ENCODE measurements at regions of chr10 and their contacts with region 1.

Region 1: DNA sequence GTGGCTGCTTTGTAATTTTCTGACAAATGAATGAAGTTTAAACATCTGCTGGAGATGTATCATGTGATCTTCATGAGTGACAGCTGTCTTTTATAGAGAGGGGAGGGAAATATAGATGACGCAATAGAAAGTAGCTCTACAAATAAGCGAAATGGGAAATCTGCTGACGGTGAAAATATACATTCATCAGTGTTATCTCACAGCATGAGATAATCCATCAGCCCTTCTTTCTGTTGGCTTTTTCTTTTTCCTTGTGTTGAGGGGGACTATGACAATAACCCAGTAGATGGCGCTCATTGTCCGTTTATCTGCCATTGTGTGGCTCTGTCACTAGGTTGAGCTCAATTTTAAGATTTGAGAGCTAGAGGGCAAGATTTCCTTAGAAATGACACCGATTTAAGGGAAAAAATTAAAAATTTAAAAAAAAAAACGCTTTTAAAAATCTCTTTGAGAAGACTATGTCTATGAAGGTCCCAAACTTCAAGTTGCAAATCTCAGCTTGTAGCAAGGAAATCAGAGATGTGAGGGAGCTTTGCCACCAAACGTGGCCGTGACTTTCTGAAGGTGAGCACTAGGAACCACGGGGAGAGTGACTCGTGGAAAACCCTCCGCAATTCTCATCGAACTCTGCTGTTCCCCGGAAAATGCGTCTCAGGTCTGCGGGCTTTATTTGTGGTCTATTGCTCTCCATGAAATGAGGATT is 114.6 kb upstream of the SFMBT2 start:
- DNase-seq: peak; percentile 58 to 74 (median 68)
- ATAC-seq: peak; percentile 77
- H3K4me3 ChIP-seq: no peak overlapping the region
- H3K27ac ChIP-seq: no peak overlapping the region
- H3K4me1 ChIP-seq: no peaks in the 10 kb centered on the region
- H3K27me3 ChIP-seq: no peaks in the 10 kb centered on the region
- CTCF ChIP-seq: peak; percentile 61 to 94 (median 88)
- POLR2A ChIP-seq: no peak

Region 2: GRCh38 chr10:7687228-7687907 is 161.9 kb after region 1 on chr10:
- intact Hi-C with region 1: loop called (anchors 10 kb)
- DNase-seq: peak; percentile 81 to 91 (median 84)
- ATAC-seq: peak; percentile 86
- H3K4me3 ChIP-seq: no peak overlapping the region
- H3K27ac ChIP-seq: peak overlapping the region in 1 of 4 donors; percentile 6
- H3K4me1 ChIP-seq: no peaks in the 10 kb centered on the region
- H3K27me3 ChIP-seq: no peaks in the 10 kb centered on the region
- CTCF ChIP-seq: peak; percentile 85 to 98 (median 91)
- POLR2A ChIP-seq: no peak

Region 3: GRCh38 chr10:9302120-9302746 is 1776.8 kb after region 1 on chr10:
- intact Hi-C with region 1: loop called (anchors 10 kb)
- DNase-seq: peak in 1 of 4 donors; percentile 12
- ATAC-seq: no peak
- H3K4me3 ChIP-seq: no peak overlapping the region
- H3K27ac ChIP-seq: no peak overlapping the region
- H3K4me1 ChIP-seq: no peaks in the 10 kb centered on the region
- H3K27me3 ChIP-seq: no peaks in the 10 kb centered on the region
- CTCF ChIP-seq: peak in 6 of 7 experiments; percentile 43 to 67 (median 56)
- POLR2A ChIP-seq: no peak